CD14-positive monocyte (primary cell): ENCODE measurements at regions of chr14 and their contacts with region 1.

Region 1: DNA sequence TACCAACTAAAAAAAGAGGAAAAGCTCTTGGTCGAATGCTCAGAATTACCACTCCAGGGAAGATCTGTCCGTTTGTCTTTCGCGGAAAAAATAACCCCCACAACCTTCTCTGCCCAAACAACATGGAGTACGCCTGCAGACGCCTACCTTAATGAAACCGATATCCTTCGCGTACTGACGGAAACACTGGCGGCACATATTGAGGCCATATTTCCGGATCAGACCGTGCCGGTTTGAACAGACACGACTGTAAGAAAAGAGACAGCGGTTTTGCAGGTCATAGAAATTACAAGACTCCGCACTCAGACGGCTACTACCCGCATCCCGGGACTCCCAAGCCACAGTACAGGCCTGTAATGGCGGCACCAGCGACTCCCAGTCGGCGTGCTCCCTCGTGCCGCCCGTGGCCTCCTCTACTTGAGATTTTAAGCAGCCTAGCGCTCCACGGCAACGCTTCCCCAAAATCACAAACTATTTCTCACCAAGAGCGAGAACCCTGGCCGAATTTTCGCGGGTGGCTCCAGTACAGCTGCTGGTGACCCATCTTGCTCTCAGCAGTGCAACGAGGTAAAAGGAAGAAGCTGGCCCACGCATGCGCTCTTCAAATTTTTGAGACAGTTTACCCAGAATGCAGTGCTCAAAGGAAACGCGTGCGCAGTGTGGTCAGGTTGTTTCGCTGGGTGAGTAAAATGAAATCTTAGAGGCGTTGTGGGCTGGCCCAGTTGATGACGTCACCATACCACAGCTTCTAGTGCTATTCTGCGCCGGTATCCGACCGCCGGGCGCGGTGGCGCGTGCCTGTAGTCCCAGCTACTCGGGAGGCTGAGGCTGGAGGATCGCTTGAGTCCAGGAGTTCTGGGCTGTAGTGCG is at the start of gene RPS29:
- DNase-seq: peak; percentile 99
- H3K4me3 ChIP-seq: peak within 1 kb of the TSS; percentile 65 to 97 (median 87)
- H3K4me3 Mint-ChIP-seq: peak within 1 kb of the TSS; percentile 97 to 100
- H3K27ac ChIP-seq: peak within 1 kb of the TSS; percentile 93 to 95
- H3K27ac Mint-ChIP-seq: peak within 1 kb of the TSS; percentile 96 to 99 (median 98)
- H3K4me1 ChIP-seq: peaks cover 16 to 21% of the 10 kb centered on the region in 2 donors
- H3K4me1 Mint-ChIP-seq: peaks cover 37% of the 10 kb centered on the region
- H3K27me3 ChIP-seq: no peaks in the 10 kb centered on the region
- H3K27me3 Mint-ChIP-seq: peaks cover 0 to 3% (median 2%) of the 10 kb centered on the region in 3 donors
- CTCF ChIP-seq: no peak
- polyA plus RNA-seq, gene RPS29: 2,325 to 4,497 (median 2,965) TPM

Region 2: GRCh38 chr14:49598485-49599300 is 12.7 kb after region 1 on chr14 and contains the start of gene LRR1:
- intact Hi-C with region 1: loop called in 1 of 2 experiments (anchors 2 kb)
- DNase-seq: peak; percentile 76 to 79 (median 78)
- H3K4me3 ChIP-seq: peak within 1 kb of the TSS; percentile 77 to 96 (median 84)
- H3K4me3 Mint-ChIP-seq: peak within 1 kb of the TSS; percentile 98 to 99
- H3K27ac ChIP-seq: peak within 1 kb of the TSS; percentile 93 to 96
- H3K27ac Mint-ChIP-seq: peak within 1 kb of the TSS; percentile 90 to 99 (median 97)
- H3K4me1 ChIP-seq: peaks cover 11 to 19% of the 10 kb centered on the region in 2 donors
- H3K4me1 Mint-ChIP-seq: peaks cover 31% of the 10 kb centered on the region
- H3K27me3 ChIP-seq: no peaks in the 10 kb centered on the region
- H3K27me3 Mint-ChIP-seq: peaks cover 2 to 7% (median 7%) of the 10 kb centered on the region in 3 donors
- CTCF ChIP-seq: no peak
- polyA plus RNA-seq, gene LRR1: 3.4 to 12.7 (median 10.5) TPM

Region 3: GRCh38 chr14:49620182-49621113 is 34.4 kb after region 1 on chr14 and contains the starts of genes MGAT2 and RPL36AL:
- intact Hi-C with region 1: loop called (anchors 5 kb)
- DNase-seq: peak; percentile 98
- H3K4me3 ChIP-seq: peak within 1 kb of the TSS; percentile 75 to 81 (median 78)
- H3K4me3 Mint-ChIP-seq: peak within 1 kb of the TSS; percentile 92 to 98
- H3K27ac ChIP-seq: peak within 1 kb of the TSS; percentile 94 to 95
- H3K27ac Mint-ChIP-seq: peak within 1 kb of the TSS; percentile 97 to 99 (median 99)
- H3K4me1 ChIP-seq: peaks cover 30 to 51% of the 10 kb centered on the region in 2 donors
- H3K4me1 Mint-ChIP-seq: peaks cover 50% of the 10 kb centered on the region
- H3K27me3 ChIP-seq: no peaks in the 10 kb centered on the region
- H3K27me3 Mint-ChIP-seq: no peaks in the 10 kb centered on the region
- CTCF ChIP-seq: peak; percentile 27
- polyA plus RNA-seq, gene MGAT2: 8.9 to 38.0 (median 36.3) TPM
- polyA plus RNA-seq, gene RPL36AL: 237 to 454 (median 408) TPM

Region 4: DNA sequence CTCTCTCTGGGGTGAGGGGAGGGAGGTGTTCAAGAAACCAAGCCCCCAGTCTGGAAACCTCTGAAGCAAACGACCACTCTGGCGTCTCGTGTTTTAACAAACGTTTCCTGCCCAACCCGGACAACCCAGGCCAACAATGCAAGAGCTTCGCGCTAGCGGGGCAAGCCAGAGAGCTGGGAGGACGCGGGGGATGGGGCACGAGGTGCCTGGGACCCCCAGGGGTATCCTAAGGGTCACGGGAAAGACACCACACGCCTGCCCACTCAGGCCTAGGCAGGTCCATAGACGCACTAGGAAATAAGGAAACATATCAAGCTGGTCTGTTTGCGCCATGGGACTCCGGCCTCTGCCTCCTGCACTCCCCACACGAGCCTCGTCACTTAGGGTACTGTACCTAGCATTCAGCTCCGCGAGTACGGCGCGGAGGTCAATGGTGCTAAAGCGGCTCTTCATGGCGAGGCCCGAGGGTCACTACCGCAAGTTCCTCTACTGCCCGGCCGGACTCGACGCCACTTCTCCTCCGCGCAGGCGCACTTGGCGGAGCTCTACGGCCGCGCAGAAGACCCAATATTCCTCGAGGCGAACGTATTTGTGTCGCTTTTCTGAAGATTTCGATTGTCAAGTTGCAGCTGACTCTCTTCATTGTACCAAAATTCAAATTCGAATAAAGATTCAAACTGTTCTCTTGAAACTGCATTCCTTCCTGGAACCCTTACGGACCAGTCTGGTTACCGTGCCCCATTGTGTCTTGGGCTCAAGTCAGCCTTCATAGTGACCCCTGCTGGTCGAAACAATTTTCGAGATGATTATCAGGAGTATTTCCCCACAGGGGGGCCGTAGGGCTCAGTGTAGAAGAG is 266.5 kb after region 1 on chr14 and contains the start of gene NEMF:
- intact Hi-C with region 1: no loop called
- DNase-seq: peak; percentile 87 to 90 (median 89)
- H3K4me3 ChIP-seq: peak within 1 kb of the TSS; percentile 72 to 96 (median 89)
- H3K4me3 Mint-ChIP-seq: peak within 1 kb of the TSS; percentile 94 to 98
- H3K27ac ChIP-seq: peak within 1 kb of the TSS; percentile 77 to 98
- H3K27ac Mint-ChIP-seq: peak within 1 kb of the TSS; percentile 91 to 99 (median 98)
- H3K4me1 ChIP-seq: peaks cover 17 to 28% of the 10 kb centered on the region in 2 donors
- H3K4me1 Mint-ChIP-seq: peaks cover 33% of the 10 kb centered on the region
- H3K27me3 ChIP-seq: no peaks in the 10 kb centered on the region
- H3K27me3 Mint-ChIP-seq: no peaks in the 10 kb centered on the region
- CTCF ChIP-seq: peak; percentile 82
- polyA plus RNA-seq, gene NEMF: 18.3 to 27.6 (median 22.2) TPM